ENCODE measurements at regions of chr1 and their contacts with region 1.

Region 1: GRCh38 chr1:116586741-116587143 is 15.9 kb upstream of the CD58 start:
- DNase-seq: peak; percentile 45
- CTCF ChIP-seq: no peak

Region 2: DNA sequence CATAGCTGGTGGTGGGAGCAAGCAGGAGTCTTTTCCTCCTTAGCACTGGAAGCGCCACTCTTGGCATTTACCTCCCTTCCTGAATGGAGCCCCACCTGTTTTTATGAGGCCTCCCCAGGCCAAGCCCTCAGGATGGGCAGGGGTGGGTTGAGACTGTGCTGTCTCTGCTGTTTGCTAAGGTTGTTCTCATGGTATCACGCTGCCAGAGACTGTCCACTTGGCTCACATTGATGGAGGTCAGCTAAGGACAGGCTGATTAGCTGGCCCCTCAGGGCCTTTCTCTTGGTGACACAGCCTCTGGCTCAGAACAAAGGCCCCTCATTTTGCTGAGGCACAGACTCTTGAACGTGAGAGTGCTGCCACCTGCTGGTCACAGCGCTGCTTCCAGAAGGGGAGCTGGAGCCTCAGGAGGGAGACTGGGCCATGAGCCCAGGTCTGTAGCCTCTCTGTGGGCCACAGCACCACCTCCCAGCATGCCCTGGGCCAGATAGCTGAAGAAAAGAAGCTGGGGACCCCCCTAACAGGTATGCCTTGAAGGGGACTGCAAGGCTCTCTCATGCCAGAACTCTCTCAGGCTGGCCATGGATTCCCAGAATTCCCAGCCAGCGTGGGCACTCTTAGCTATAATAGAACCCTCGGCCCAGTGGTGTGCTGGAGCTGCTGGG is 101.5 kb before region 1 on chr1:
- in situ Hi-C with region 1: no loop called
- DNase-seq: peak; percentile 82
- CTCF ChIP-seq: peak; percentile 95

Region 3: DNA sequence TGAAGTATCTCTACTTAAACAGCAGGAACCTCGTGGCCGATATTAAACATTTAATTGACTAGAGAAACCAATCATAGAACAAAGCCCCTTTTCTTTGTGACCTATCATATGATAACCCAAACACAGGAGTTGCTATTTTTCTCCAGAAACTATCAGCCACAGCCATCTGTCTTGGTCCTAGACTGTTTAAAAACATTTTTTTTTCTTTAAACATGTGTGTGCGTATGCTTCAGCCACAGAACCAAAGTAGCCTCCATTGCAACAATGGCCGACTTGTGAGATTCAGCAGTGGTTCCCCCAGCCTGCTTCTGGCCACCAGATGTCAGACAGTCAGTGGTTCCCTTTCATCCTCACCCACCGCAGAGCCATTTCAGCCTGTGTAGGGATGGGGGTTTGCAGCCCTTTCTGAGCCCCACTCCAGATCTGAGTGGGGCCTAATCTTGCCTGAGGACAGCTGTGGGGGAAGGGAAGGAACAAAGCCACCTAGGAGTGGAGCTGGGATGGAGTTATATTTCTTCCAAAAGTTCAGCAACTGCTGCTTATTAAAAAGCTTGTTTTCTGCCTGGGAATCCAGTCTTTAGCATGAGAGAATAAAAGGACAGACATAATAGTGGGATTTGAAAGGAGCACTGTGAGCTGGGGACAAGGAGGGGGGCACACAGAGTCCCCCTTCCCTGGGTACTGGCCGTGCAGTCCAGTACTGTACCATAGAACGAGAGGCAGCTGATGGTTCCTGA is 92.5 kb after region 1 on chr1:
- in situ Hi-C with region 1: loop called (anchors 10 kb)
- DNase-seq: no peak
- CTCF ChIP-seq: no peak

Region 4: DNA sequence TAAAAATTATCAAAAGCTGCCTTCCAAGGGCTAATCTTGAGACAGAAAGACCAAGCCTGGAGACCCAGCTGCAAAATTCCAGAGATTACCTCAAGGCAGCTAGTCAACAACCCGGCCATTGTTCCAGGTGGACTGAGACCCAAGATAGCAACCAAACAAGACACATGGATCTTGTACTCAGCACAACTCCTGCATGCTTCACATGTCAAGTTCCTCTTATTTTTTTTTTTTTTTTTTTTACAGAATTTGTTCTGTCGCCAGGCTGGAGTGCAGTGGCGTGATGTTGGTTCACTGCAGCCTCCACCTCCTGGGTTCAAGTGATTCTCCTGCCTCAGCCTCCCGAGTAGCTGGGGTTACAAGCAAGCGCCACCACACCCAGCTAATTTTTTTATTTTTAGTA is 207.6 kb after region 1 on chr1:
- in situ Hi-C with region 1: no loop called
- DNase-seq: no peak
- CTCF ChIP-seq: no peak

Measured in GM13977 (cell line).